ENCODE measurements at regions of chr1 and their contacts with region 1.

Region 1: DNA sequence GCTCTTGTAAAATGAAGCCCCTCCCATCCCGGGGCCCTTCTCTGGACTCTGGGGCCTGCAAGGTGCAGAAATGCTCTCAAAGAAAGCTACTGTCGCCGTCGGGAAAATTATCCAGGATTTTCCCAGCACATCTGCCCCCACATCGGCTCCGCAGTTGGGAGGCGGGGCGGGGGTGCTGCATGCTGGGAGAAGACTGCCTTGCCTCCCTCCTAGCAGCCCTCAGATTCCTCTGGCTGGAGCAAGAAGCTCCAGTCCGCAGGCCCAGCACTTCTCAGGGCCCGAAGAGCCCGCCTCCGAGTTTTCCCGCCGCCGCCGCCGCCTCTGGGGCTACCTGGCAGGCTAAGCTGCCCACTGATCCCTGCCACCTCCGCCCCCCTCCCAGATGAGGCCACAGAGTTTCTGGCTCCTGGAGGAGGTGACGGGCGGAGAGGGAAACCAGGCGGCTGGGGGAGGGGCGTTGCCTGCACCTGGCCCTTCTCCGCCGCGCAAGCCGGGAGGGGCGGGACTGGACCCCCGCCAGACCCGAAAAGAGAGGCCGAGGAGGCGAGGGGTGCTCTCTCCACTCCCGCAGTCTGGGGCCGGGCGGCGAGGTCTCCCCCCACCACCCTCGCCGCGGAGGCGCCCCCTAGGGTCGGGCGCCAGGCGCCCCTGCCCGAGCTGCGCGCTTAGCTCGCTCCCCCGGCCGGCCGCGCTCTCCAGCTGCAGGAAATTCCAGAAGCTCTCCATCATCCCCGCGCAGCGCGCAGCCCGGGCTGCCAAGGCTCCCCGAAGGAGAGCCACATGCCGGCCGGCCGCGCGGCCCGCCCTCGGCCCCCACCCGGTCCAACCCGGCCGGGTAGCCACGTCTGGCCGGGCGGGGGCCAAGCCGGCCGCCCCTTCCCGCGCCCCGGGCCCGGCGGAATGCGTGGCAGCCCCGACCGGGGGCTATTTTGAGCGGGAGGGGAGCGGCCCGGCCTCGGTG is 28.8 kb downstream of the AHDC1 start:
- DNase-seq: no peak
- ATAC-seq: peak; percentile 32
- H3K4me3 ChIP-seq: peak overlapping the region; percentile 53 to 61 (median 60); a peak in 5 of 6 replicates
- H3K27ac ChIP-seq: peak overlapping the region; percentile 68
- H3K4me1 ChIP-seq: peaks cover 73% of the 10 kb centered on the region
- H3K27me3 ChIP-seq: no peaks in the 10 kb centered on the region
- CTCF ChIP-seq: peak; percentile 50
- EP300 ChIP-seq: no peak
- POLR2A ChIP-seq: no peak
- RAD21 ChIP-seq: no peak

Region 2: GRCh38 chr1:27332536-27333281 is 242.4 kb before region 1 on chr1:
- CTCF ChIA-PET with region 1: no interaction called
- POLR2A ChIA-PET with region 1: no interaction called
- in situ Hi-C with region 1: no loop called
- intact Hi-C with region 1: no loop called
- DNase-seq: no peak
- ATAC-seq: peak; percentile 89
- H3K4me3 ChIP-seq: no peak overlapping the region
- H3K27ac ChIP-seq: no peak overlapping the region
- H3K4me1 ChIP-seq: no peaks in the 10 kb centered on the region
- H3K27me3 ChIP-seq: no peaks in the 10 kb centered on the region
- CTCF ChIP-seq: peak; percentile 87
- EP300 ChIP-seq: no peak
- POLR2A ChIP-seq: 0 out of 4 replicates have a peak, but pooled peaks of 1 of the 2 experiments have one; percentile 18
- RAD21 ChIP-seq: peak; percentile 32; the same call in 1 of the 2 replicates

Region 3: GRCh38 chr1:27525296-27526272 is 49.6 kb before region 1 on chr1:
- CTCF ChIA-PET with region 1: no interaction called
- POLR2A ChIA-PET with region 1: interaction called, 6 read pairs
- in situ Hi-C with region 1: no loop called
- intact Hi-C with region 1: loop called (anchors 5 kb)
- DNase-seq: no peak
- ATAC-seq: no peak
- H3K4me3 ChIP-seq: peak overlapping the region in 2 of 3 experiments; percentile 11 to 79; a peak in 2 of 6 replicates
- H3K27ac ChIP-seq: no peak overlapping the region
- H3K4me1 ChIP-seq: peaks cover 88% of the 10 kb centered on the region
- H3K27me3 ChIP-seq: no peaks in the 10 kb centered on the region
- CTCF ChIP-seq: no peak
- EP300 ChIP-seq: no peak
- POLR2A ChIP-seq: no peak
- RAD21 ChIP-seq: no peak

Region 4: GRCh38 chr1:27556781-27557595 is 18.2 kb before region 1 on chr1:
- CTCF ChIA-PET with region 1: interaction called, 3 read pairs
- POLR2A ChIA-PET with region 1: interaction called, 48 read pairs
- in situ Hi-C with region 1: no loop called
- intact Hi-C with region 1: no loop called
- DNase-seq: peak; percentile 51
- ATAC-seq: peak; percentile 37
- H3K4me3 ChIP-seq: no peak overlapping the region
- H3K27ac ChIP-seq: peak overlapping the region; percentile 33
- H3K4me1 ChIP-seq: peaks cover 61% of the 10 kb centered on the region
- H3K27me3 ChIP-seq: no peaks in the 10 kb centered on the region
- CTCF ChIP-seq: peak; percentile 88
- EP300 ChIP-seq: no peak
- POLR2A ChIP-seq: no peak
- RAD21 ChIP-seq: peak; percentile 82